ENCODE measurements at regions of chr11 and their contacts with region 1.

Region 1: GRCh38 chr11:118607401-118608359 is at the start of gene PHLDB1:
- DNase-seq: peak; percentile 64
- ATAC-seq: peak; percentile 71
- H3K4me3 ChIP-seq: peak within 1 kb of the TSS; percentile 85
- H3K27ac ChIP-seq: no peak within 1 kb of the TSS
- H3K4me1 ChIP-seq: peaks cover 5% of the 10 kb centered on the region; the same call in 1 of the 2 replicates
- H3K27me3 ChIP-seq: no peaks in the 10 kb centered on the region
- CTCF ChIP-seq: peak; percentile 80
- total RNA-seq, gene PHLDB1: 36.1 and 37.1 TPM in 2 replicates

Region 2: GRCh38 chr11:118476676-118477075 is 131.0 kb before region 1 on chr11:
- CTCF ChIA-PET with region 1: no interaction called
- POLR2A ChIA-PET with region 1: no interaction called
- intact Hi-C with region 1: no loop called
- DNase-seq: no peak
- ATAC-seq: no peak
- H3K4me3 ChIP-seq: no peak overlapping the region
- H3K27ac ChIP-seq: no peak overlapping the region
- H3K4me1 ChIP-seq: no peaks in the 10 kb centered on the region
- H3K27me3 ChIP-seq: no peaks in the 10 kb centered on the region
- CTCF ChIP-seq: no peak

Region 3: GRCh38 chr11:118621071-118621783 is 13.5 kb after region 1 on chr11:
- CTCF ChIA-PET with region 1: interaction called, 4 read pairs
- POLR2A ChIA-PET with region 1: interaction called, 20 read pairs
- intact Hi-C with region 1: no loop called
- DNase-seq: peak; percentile 90
- ATAC-seq: peak; percentile 60
- H3K4me3 ChIP-seq: peak overlapping the region; percentile 75
- H3K27ac ChIP-seq: peak overlapping the region; percentile 20; the same call in 1 of the 2 replicates
- H3K4me1 ChIP-seq: peaks cover 61% of the 10 kb centered on the region
- H3K27me3 ChIP-seq: no peaks in the 10 kb centered on the region
- CTCF ChIP-seq: no peak

Region 4: DNA sequence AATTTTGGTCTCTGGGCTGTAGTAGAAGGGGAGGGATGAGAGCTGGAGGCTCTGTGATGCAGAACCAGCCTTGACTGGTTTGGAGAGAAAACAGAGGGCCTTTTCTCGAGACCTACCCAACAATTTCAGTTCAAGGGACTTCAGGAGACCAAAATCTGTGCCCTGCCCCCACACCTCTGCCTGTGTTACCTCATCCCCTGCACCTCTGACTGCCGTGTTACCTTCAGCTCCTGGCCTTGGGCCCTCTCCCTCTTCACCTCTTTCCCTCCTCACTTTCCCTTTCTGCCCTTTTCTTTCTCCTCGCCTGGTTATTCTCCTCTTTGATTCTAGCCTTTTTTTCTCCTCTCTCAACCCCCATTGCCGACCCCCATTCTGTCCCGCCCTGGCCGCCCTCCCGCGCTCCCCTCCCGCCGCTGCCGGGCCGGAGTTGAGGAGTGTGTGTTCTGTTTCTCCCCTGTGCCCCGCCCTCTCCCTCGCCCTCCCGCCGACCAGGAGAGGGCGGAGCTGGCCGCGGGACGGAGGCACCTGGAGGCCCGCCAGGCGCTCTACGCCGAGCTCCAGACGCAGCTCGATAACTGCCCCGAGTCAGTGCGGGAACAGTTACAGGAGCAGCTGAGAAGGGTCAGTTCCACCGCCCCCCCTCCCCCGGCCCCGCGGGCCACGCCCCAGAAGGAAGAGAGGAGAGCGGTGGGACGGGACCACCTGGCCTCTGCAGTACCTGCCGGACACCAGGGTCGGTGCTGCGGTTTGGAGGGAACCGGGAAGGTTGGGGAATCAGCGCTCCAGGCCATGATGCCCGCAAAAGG is 27.0 kb after region 1 on chr11:
- CTCF ChIA-PET with region 1: interaction called, 3 read pairs
- POLR2A ChIA-PET with region 1: no interaction called
- intact Hi-C with region 1: loop called (anchors 2 kb)
- DNase-seq: peak; percentile 86
- ATAC-seq: peak; percentile 87
- H3K4me3 ChIP-seq: peak overlapping the region; percentile 62
- H3K27ac ChIP-seq: no peak overlapping the region
- H3K4me1 ChIP-seq: peaks cover 15% of the 10 kb centered on the region; the same call in 1 of the 2 replicates
- H3K27me3 ChIP-seq: no peaks in the 10 kb centered on the region
- CTCF ChIP-seq: no peak; the same call in 1 of the 2 replicates

Region 5: GRCh38 chr11:118659314-118659952 is 51.8 kb after region 1 on chr11:
- CTCF ChIA-PET with region 1: interaction called, 4 read pairs
- POLR2A ChIA-PET with region 1: no interaction called
- intact Hi-C with region 1: loop called (anchors 1 kb)
- DNase-seq: peak; percentile 96
- ATAC-seq: peak; percentile 93
- H3K4me3 ChIP-seq: no peak overlapping the region
- H3K27ac ChIP-seq: no peak overlapping the region
- H3K4me1 ChIP-seq: no peaks in the 10 kb centered on the region
- H3K27me3 ChIP-seq: no peaks in the 10 kb centered on the region
- CTCF ChIP-seq: peak; percentile 98